ENCODE measurements at regions of chr5 and their contacts with region 1.

Region 1: DNA sequence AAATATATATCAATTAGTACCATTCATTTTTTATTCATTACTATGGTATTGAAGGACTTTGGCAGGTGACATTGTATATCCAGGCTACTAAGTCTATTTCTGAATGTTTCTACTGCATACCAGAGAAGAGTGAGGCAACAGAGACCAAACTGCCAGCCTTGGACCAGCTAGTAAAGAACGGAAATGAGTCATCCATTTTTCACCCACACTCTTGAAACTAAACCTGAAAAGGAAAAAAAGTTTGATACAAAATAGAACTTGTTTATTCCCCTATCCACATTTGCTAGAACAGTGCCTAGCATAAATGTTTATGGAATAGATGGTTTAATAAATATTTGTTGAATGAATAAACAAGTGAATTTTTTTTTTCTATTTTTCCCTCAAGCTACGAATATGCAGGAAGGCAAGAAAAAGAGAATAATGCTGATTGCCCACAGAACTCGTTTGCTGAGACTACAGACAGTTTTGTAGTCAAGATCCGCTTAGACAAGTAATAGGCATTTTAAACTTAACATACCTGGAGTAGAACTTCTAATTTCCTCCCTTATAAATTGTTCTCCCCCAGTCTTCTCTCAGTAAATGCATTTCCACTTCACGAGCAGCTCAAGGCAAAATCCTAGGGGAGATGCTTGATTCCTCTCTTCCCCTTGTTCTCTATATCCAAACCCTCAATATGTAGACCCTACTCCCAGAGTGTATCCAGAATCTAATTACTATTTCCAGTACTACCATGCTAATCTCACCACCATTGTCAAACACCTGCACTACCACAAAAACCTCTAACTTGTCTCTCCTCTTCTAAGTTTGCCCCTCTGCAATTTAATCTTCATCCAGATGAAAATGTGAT is 146.2 kb upstream of the RASA1 start:
- DNase-seq: peak; percentile 75
- ATAC-seq: peak; percentile 85
- H3K4me3 ChIP-seq: peak overlapping the region; percentile 33; the same call in 1 of the 2 replicates
- H3K27ac ChIP-seq: peak overlapping the region; percentile 78
- H3K4me1 ChIP-seq: peaks cover 41% of the 10 kb centered on the region
- H3K27me3 ChIP-seq: no peaks in the 10 kb centered on the region
- CTCF ChIP-seq: no peak
- EP300 ChIP-seq: peak in 1 of 2 experiments; percentile 81; a peak in 2 of 4 replicates
- POLR2A ChIP-seq: no peak
- RAD21 ChIP-seq: no peak

Region 2: DNA sequence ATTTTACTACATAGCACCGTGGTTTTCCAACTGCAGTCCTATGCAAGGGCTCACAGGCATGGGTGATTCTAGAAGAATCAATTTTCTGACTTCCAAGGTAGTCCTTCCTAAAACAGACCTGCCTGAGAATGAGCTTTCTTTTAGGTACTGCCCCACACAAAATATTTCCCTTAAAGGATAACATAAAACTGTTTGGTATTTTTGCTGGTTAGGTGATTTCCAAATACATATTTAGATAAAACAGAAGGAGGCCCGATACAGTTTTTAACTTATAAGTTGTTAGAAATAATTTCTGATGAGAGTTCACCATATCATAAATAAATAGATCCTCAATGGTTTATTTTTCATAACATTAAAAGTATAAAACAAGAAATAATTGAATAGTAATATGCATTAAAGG is 457.4 kb before region 1 on chr5:
- CTCF ChIA-PET with region 1: no interaction called
- POLR2A ChIA-PET with region 1: no interaction called
- RAD21 ChIA-PET with region 1: no interaction called
- SMC1A ChIA-PET with region 1: no interaction called
- in situ Hi-C with region 1: no loop called
- intact Hi-C with region 1: no loop called
- DNase-seq: no peak
- ATAC-seq: no peak
- H3K4me3 ChIP-seq: no peak overlapping the region
- H3K27ac ChIP-seq: no peak overlapping the region
- H3K4me1 ChIP-seq: no peaks in the 10 kb centered on the region
- H3K27me3 ChIP-seq: no peaks in the 10 kb centered on the region
- CTCF ChIP-seq: no peak
- EP300 ChIP-seq: no peak
- POLR2A ChIP-seq: no peak
- RAD21 ChIP-seq: no peak

Region 3: GRCh38 chr5:87081511-87082372 is 39.8 kb before region 1 on chr5:
- CTCF ChIA-PET with region 1: interaction called, 8 read pairs
- POLR2A ChIA-PET with region 1: interaction called, 7 read pairs
- RAD21 ChIA-PET with region 1: interaction called, 16 read pairs
- SMC1A ChIA-PET with region 1: interaction called, 17 read pairs
- in situ Hi-C with region 1: no loop called
- intact Hi-C with region 1: loop called (anchors 2 kb)
- DNase-seq: peak; percentile 80
- ATAC-seq: peak; percentile 94
- H3K4me3 ChIP-seq: peak overlapping the region; percentile 13; the same call in 1 of the 2 replicates
- H3K27ac ChIP-seq: peak overlapping the region; percentile 90
- H3K4me1 ChIP-seq: peaks cover 15% of the 10 kb centered on the region
- H3K27me3 ChIP-seq: no peaks in the 10 kb centered on the region
- CTCF ChIP-seq: no peak
- EP300 ChIP-seq: peak; percentile 87 to 91
- POLR2A ChIP-seq: no peak
- RAD21 ChIP-seq: peak; percentile 36; the same call in 1 of the 2 replicates

Region 4: GRCh38 chr5:87103596-87104287 is 17.8 kb before region 1 on chr5:
- CTCF ChIA-PET with region 1: interaction called, 6 read pairs
- POLR2A ChIA-PET with region 1: interaction called, 8 read pairs
- RAD21 ChIA-PET with region 1: interaction called, 26 read pairs
- SMC1A ChIA-PET with region 1: interaction called, 44 read pairs
- in situ Hi-C with region 1: no loop called
- intact Hi-C with region 1: loop called (anchors 1 kb)
- DNase-seq: no peak
- ATAC-seq: peak; percentile 96
- H3K4me3 ChIP-seq: no peak overlapping the region
- H3K27ac ChIP-seq: peak overlapping the region; percentile 66
- H3K4me1 ChIP-seq: peaks cover 19% of the 10 kb centered on the region
- H3K27me3 ChIP-seq: no peaks in the 10 kb centered on the region
- CTCF ChIP-seq: no peak
- EP300 ChIP-seq: no peak
- POLR2A ChIP-seq: no peak
- RAD21 ChIP-seq: no peak

Region 5: DNA sequence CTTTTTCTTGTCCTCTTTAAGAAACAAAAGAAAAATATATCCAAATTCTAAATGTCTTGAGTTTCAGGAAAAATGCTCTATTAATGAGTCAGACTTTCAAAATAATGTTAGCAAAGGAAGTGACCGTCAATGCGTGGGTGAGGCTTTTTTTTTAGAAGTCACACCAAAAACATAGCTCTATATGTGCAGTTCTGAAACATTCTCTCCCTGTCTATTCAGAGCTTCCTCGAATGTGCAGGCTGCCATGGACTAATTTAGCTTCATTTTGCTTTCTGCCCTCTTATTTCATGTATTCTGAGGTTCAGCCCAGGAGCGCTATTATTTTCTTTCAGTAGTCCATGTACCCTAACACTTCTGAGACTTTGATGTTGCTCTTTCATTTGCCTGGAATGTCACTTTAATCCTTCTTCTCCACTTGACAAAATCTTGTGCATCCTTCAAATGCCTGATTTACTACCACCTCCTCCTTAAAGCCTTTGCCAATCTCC is 73.6 kb after region 1 on chr5:
- CTCF ChIA-PET with region 1: interaction called, 4 read pairs
- POLR2A ChIA-PET with region 1: interaction called, 4 read pairs
- RAD21 ChIA-PET with region 1: interaction called, 15 read pairs
- SMC1A ChIA-PET with region 1: interaction called, 28 read pairs
- in situ Hi-C with region 1: no loop called
- intact Hi-C with region 1: no loop called
- DNase-seq: peak; percentile 48
- ATAC-seq: peak; percentile 73
- H3K4me3 ChIP-seq: no peak overlapping the region
- H3K27ac ChIP-seq: peak overlapping the region; percentile 63
- H3K4me1 ChIP-seq: peaks cover 35% of the 10 kb centered on the region
- H3K27me3 ChIP-seq: no peaks in the 10 kb centered on the region
- CTCF ChIP-seq: no peak
- EP300 ChIP-seq: 0 out of 4 replicates have a peak, but pooled peaks of 1 of the 2 experiments have one; percentile 46
- POLR2A ChIP-seq: no peak
- RAD21 ChIP-seq: peak; percentile 14; the same call in 1 of the 2 replicates

Region 6: DNA sequence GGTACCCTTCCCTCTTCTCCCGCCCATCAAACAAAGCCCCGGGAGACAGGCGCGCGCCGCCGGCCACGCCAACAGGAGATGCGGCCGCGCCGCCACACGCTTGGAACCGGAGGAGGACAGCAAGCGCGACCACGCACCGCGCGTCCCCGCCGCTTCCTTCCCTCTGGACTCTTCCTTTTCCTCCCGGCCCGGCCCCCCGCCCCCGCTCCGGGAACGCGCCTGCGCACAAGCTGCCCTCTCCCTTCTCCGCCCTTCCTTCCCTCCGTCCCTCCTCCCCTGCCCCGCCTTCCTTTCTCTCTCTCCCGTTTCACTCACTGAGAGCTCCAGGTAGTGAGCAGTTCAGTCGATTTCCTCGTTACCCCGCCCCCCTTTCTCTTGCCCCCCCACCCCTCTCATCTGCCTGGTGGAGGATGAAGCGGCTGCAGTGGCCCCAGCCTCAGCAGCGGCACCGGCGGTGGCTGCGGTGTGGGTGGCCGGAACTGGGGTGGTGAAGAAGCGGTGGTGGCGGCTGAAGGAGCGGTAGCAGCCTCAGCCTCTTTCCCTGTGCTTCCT is 146.1 kb after region 1 on chr5 and contains the start of gene RASA1:
- CTCF ChIA-PET with region 1: interaction called, 4 read pairs
- POLR2A ChIA-PET with region 1: interaction called, 12 read pairs
- RAD21 ChIA-PET with region 1: interaction called, 8 read pairs
- SMC1A ChIA-PET with region 1: interaction called, 5 read pairs
- in situ Hi-C with region 1: no loop called
- intact Hi-C with region 1: loop called (anchors 10 kb)
- DNase-seq: peak; percentile 76
- ATAC-seq: peak; percentile 74
- H3K4me3 ChIP-seq: peak within 1 kb of the TSS; percentile 98
- H3K27ac ChIP-seq: peak within 1 kb of the TSS; percentile 94
- H3K4me1 ChIP-seq: no peaks in the 10 kb centered on the region
- H3K27me3 ChIP-seq: no peaks in the 10 kb centered on the region
- CTCF ChIP-seq: no peak
- EP300 ChIP-seq: no peak
- POLR2A ChIP-seq: peak; percentile 91
- RAD21 ChIP-seq: peak; percentile 30
- polyA plus RNA-seq, gene RASA1: 7.8 to 12.0 TPM